ENCODE measurements at regions of chr7 and their contacts with region 1.

Region 1: DNA sequence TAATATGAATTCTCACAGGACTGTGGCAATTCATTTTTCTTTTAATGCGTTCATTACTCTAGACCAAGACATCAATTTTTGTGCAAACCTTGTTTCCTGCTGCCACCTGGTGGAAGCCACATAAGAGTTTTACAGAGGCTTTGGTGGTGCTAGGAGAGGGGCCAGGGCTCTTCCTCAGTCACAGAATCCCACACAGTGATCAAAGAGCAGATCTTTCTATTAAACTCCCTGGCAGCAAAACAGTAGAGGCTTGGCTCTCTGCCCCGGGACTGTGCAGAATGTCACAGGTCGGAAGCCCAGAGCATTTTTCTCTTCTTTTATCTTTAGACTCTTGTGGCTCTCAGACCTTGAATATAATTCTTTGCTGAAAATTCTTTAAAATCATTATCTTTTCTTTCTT is 506.4 kb upstream of the C7orf33 start:
- H3K4me3 Mint-ChIP-seq: no peak overlapping the region
- H3K27ac Mint-ChIP-seq: no peak overlapping the region
- H3K4me1 Mint-ChIP-seq: no peaks in the 10 kb centered on the region
- H3K27me3 Mint-ChIP-seq: no peaks in the 10 kb centered on the region

Region 2: DNA sequence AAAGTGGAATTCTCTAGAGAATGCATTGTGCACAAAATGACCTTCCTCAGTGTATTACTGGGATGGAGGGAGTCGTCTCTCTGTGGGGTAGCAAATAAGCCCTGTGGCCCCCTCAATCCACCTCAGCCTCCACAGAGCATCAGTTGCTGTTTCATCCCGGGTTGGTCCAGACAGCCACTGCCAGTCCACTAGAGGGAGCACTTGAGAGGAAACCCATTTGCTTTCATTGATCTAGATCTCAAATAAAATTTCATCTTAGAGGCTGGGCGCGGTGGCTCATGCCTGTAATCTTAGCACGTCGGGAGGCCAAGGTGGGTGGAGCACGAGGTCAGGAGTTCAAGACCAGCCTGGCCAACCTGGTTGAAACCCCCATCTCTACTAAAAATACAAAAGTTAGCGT is 838.8 kb before region 1 on chr7:
- intact Hi-C with region 1: loop called (anchors 1 kb)
- H3K4me3 Mint-ChIP-seq: no peak overlapping the region
- H3K27ac Mint-ChIP-seq: no peak overlapping the region
- H3K4me1 Mint-ChIP-seq: no peaks in the 10 kb centered on the region
- H3K27me3 Mint-ChIP-seq: no peaks in the 10 kb centered on the region

Region 3: DNA sequence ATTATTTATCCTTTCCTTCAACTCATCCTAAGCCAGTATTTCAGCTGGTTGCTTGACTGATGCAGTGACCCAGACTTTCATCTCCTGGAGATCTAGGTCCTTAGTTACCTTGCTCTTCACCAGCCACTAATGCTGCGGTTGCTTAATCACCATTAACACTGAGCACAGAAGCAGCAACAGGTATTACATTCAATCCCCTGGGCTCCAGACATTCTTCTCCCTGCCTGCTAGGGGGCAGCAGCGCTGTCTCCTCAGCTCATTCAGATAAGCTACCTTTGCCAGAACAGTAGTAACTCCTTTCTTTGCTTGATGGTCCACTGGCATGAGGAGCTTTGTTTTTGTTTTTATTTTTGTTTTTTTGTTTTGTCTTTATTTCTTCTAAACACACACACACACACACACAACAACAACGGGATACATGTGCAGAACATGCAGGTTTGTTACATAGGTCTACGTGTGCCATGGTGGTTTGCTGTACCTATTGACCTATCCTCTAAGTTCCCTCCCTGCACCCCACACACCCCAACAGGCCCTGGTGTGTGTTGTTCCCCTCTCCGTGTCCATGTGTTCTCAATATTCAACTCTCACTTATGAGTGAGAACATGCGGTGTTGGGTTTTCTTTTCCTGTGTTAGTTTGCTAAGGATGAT is 536.8 kb before region 1 on chr7:
- intact Hi-C with region 1: loop called (anchors 2 kb)
- H3K4me3 Mint-ChIP-seq: no peak overlapping the region
- H3K27ac Mint-ChIP-seq: no peak overlapping the region
- H3K4me1 Mint-ChIP-seq: no peaks in the 10 kb centered on the region
- H3K27me3 Mint-ChIP-seq: no peaks in the 10 kb centered on the region